PC-3 (cell line): ENCODE measurements at regions of chr5 and their contacts with region 1.

Region 1: GRCh38 chr5:128844354-128844923 is 120.8 kb upstream of the SLC27A6 start:
- DNase-seq: peak; percentile 63
- ATAC-seq: peak; percentile 53; the same call in 1 of the 2 replicates
- H3K4me3 ChIP-seq: no peak overlapping the region
- H3K27ac ChIP-seq: no peak overlapping the region
- H3K4me1 ChIP-seq: no peaks in the 10 kb centered on the region
- H3K27me3 ChIP-seq: no peaks in the 10 kb centered on the region
- CTCF ChIP-seq: peak; percentile 70

Region 2: DNA sequence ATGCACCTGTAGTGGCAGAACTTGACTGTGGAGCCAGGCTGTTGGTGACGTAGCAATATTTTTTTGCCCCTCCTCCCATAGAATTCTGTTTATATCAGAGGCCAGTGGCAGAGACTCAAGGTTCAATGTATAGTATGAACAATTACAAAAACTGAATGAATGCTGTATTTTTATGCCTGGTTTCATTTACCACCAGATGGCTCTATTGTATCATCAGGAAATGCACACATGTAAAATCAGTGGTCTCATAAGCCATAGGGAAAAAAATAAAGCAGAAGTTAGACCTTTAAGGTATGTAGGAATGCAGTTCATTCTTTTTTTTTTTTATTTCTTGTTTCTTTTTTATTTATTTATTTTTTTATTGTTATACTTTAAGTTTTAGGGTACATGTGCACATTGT is 1097.7 kb before region 1 on chr5:
- CTCF ChIA-PET with region 1: no interaction called
- POLR2A ChIA-PET with region 1: no interaction called
- intact Hi-C with region 1: loop called (anchors 10 kb)
- DNase-seq: peak; percentile 69
- ATAC-seq: peak; percentile 92
- H3K4me3 ChIP-seq: no peak overlapping the region
- H3K27ac ChIP-seq: no peak overlapping the region
- H3K4me1 ChIP-seq: no peaks in the 10 kb centered on the region
- H3K27me3 ChIP-seq: peaks cover 20% of the 10 kb centered on the region
- CTCF ChIP-seq: peak; percentile 81

Region 3: GRCh38 chr5:128380330-128380729 is 464.1 kb before region 1 on chr5:
- CTCF ChIA-PET with region 1: no interaction called
- POLR2A ChIA-PET with region 1: no interaction called
- intact Hi-C with region 1: loop called (anchors 10 kb)
- DNase-seq: no peak
- ATAC-seq: no peak
- H3K4me3 ChIP-seq: no peak overlapping the region
- H3K27ac ChIP-seq: no peak overlapping the region
- H3K4me1 ChIP-seq: no peaks in the 10 kb centered on the region
- H3K27me3 ChIP-seq: no peaks in the 10 kb centered on the region
- CTCF ChIP-seq: no peak

Region 4: GRCh38 chr5:128538250-128539037 is 306.0 kb before region 1 on chr5:
- CTCF ChIA-PET with region 1: no interaction called
- POLR2A ChIA-PET with region 1: no interaction called
- intact Hi-C with region 1: loop called (anchors 5 kb)
- DNase-seq: peak; percentile 77
- ATAC-seq: peak; percentile 90
- H3K4me3 ChIP-seq: peak overlapping the region; percentile 92
- H3K27ac ChIP-seq: no peak overlapping the region
- H3K4me1 ChIP-seq: peaks cover 22% of the 10 kb centered on the region
- H3K27me3 ChIP-seq: no peaks in the 10 kb centered on the region
- CTCF ChIP-seq: no peak

Region 5: GRCh38 chr5:128667152-128667551 is 177.3 kb before region 1 on chr5:
- CTCF ChIA-PET with region 1: no interaction called
- POLR2A ChIA-PET with region 1: no interaction called
- intact Hi-C with region 1: loop called (anchors 1 kb)
- DNase-seq: peak; percentile 25
- ATAC-seq: peak; percentile 52
- H3K4me3 ChIP-seq: no peak overlapping the region
- H3K27ac ChIP-seq: no peak overlapping the region
- H3K4me1 ChIP-seq: peaks cover 4% of the 10 kb centered on the region; the same call in 1 of the 2 replicates
- H3K27me3 ChIP-seq: no peaks in the 10 kb centered on the region
- CTCF ChIP-seq: peak; percentile 50; the same call in 1 of the 2 replicates

Region 6: DNA sequence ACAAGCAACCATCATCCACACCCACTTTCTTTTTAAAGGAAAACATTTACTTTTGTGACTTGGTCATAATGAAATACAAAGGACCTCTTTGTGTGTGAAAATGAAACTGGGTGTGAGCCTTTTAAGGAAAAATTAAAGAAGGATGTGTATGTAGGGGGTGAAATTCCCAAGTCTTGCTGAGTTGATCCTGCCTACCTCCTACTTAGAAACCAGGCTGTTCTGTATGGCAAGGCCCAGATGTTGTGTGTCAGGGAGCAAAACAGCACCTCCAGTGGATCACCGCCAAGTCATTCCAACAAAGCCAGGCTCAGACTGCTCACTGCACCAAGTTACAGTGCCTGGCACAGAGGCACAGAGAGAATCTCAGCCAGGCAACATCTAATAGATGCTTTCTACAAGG is 107.9 kb before region 1 on chr5:
- CTCF ChIA-PET with region 1: no interaction called
- POLR2A ChIA-PET with region 1: no interaction called
- intact Hi-C with region 1: loop called (anchors 2 kb)
- DNase-seq: peak; percentile 74
- ATAC-seq: peak; percentile 91
- H3K4me3 ChIP-seq: 0 out of 2 replicates have a peak overlapping the region, but pooled peaks have one; percentile 9
- H3K27ac ChIP-seq: peak overlapping the region; percentile 89
- H3K4me1 ChIP-seq: peaks cover 18% of the 10 kb centered on the region
- H3K27me3 ChIP-seq: no peaks in the 10 kb centered on the region
- CTCF ChIP-seq: no peak

Region 7: GRCh38 chr5:128965011-128965637 is 120.7 kb after region 1 on chr5 and contains the start of gene SLC27A6:
- CTCF ChIA-PET with region 1: no interaction called
- POLR2A ChIA-PET with region 1: no interaction called
- intact Hi-C with region 1: no loop called
- DNase-seq: no peak
- ATAC-seq: no peak
- H3K4me3 ChIP-seq: no peak within 1 kb of the TSS
- H3K27ac ChIP-seq: no peak within 1 kb of the TSS
- H3K4me1 ChIP-seq: no peaks in the 10 kb centered on the region
- H3K27me3 ChIP-seq: peaks cover 10% of the 10 kb centered on the region; the same call in 1 of the 2 replicates
- CTCF ChIP-seq: no peak
- total RNA-seq, gene SLC27A6: not detected in 2 replicates

Region 8: DNA sequence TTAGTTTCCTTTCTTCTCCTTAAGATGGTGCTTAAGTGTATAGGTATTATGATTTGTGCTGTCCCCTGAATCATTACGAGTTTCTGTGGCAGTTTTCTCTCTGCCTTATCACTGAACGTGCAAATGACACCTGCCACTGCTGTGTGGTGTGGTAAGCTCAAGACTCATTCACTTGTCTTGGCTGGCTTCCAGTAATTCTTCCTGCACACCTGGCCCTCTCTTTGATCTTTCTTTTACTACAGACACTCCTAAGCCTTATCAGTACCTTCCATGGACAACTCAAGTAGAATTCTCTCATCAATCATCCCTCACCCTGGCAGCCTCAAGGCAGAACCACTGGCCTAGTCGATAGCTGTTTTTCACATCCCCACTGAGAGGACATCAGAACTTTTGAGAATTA is 533.1 kb after region 1 on chr5:
- CTCF ChIA-PET with region 1: no interaction called
- POLR2A ChIA-PET with region 1: no interaction called
- intact Hi-C with region 1: no loop called
- DNase-seq: no peak
- ATAC-seq: no peak
- H3K4me3 ChIP-seq: no peak overlapping the region
- H3K27ac ChIP-seq: no peak overlapping the region
- H3K4me1 ChIP-seq: no peaks in the 10 kb centered on the region
- H3K27me3 ChIP-seq: peaks cover 7% of the 10 kb centered on the region; the same call in 1 of the 2 replicates
- CTCF ChIP-seq: no peak